Astrocyte of the cerebellum (primary cell): ENCODE measurements at regions of chr2 and their contacts with region 1.

Region 1: GRCh38 chr2:189249171-189249570 is 69.6 kb upstream of the COL5A2 start:
- DNase-seq: peak; percentile 65
- H3K4me3 ChIP-seq: no peak overlapping the region
- CTCF ChIP-seq: no peak

Region 2: DNA sequence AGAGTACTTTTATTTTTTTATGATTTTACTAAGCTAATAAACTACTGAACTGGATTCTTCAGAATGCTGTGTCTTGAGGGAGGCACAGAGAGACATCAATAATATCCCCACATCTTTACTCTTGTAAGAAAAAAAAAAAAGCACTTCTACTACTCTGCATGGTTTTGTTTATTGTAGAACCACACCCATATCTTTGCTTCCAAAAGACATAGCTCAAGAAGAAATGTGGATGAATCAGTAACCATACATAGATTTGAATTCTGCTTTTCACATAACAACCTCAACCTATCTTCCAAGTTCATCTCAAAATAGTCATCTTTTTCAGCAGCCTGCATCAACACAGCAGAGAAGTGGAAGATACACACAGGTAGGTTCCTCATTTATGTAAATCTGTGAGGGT is 57.4 kb before region 1 on chr2:
- in situ Hi-C with region 1: no loop called
- DNase-seq: no peak
- H3K4me3 ChIP-seq: no peak overlapping the region
- CTCF ChIP-seq: no peak

Region 3: GRCh38 chr2:189208254-189208653 is 40.9 kb before region 1 on chr2:
- in situ Hi-C with region 1: loop called (anchors 5 kb)
- DNase-seq: no peak
- H3K4me3 ChIP-seq: no peak overlapping the region
- CTCF ChIP-seq: no peak

Region 4: DNA sequence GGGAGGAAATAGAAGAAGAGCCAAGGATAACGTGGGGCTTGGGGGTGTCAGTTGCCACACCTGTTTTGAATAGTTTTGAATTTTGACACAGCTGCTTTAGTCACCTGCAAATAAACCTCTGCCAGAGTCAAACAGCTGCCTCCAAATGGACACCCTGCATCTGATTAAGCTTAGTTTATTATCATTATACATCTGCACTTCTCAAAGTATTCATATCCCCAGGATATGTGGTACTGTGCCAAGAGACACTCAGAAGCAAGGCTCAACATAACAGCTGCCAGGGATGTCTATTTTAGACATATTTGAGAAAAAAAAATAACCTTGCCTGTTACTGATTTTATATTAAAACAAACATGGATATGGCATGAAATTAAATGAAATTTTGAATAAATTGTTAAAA is 69.6 kb after region 1 on chr2:
- in situ Hi-C with region 1: loop called (anchors 5 kb)
- DNase-seq: no peak
- H3K4me3 ChIP-seq: no peak overlapping the region
- CTCF ChIP-seq: no peak